ENCODE measurements at regions of chr15 and their contacts with region 1.

Region 1: DNA sequence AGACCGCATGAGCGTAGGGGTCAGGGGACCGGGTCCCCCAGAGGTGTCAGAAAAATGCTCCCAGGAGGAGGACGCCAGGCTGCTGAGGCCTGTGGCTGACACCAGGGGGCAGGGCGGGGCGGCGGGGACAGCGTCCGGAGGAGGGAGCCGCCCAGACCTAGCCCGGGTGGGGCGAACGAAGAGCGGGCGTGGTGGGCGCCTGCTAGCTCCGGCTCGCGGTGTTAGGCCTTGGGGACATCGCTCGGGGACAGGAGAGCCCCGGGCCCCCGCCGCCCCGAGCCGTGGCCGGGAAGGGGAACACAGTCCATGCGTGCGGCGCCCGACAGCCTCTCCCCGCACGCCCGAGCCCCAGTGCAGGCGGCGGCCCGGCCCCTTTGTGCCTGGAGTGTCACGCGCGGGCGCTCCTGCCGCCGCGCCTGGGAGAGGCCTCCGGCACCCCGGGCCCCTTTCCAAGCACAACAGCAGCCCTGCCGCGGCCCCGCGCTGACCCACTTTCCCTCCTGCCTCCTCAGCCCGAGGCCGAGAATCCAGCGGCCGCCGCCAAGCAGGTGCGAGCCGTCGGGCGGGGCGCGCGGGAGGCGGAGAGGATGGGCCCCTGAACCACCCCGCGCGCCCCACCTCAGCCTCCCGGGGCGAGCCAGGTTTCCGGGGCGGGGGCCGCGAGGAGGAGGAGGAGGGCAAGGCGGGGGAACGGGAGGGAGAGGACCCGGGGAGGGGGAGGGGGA is 111.0 kb upstream of the KLF13 start:
- DNase-seq: peak; percentile 69 to 83 (median 73)
- H3K4me3 ChIP-seq: peak overlapping the region; percentile 22
- H3K4me3 Mint-ChIP-seq: peak overlapping the region; percentile 56 to 91 (median 71)
- H3K27ac ChIP-seq: peak overlapping the region; percentile 24
- H3K27ac Mint-ChIP-seq: peak overlapping the region in 7 of 8 donors; percentile 21 to 89 (median 72)
- H3K4me1 ChIP-seq: peaks cover 24% of the 10 kb centered on the region
- H3K4me1 Mint-ChIP-seq: peaks cover 19 to 28% (median 20%) of the 10 kb centered on the region in 3 donors
- H3K27me3 ChIP-seq: no peaks in the 10 kb centered on the region
- H3K27me3 Mint-ChIP-seq: no peaks in the 10 kb centered on the region

Region 2: GRCh38 chr15:31200735-31201151 is 14.9 kb before region 1 on chr15:
- CTCF ChIA-PET with region 1: interaction called, 12 read pairs
- POLR2A ChIA-PET with region 1: interaction called, 3 read pairs
- DNase-seq: peak; percentile 34 to 82 (median 49)
- H3K4me3 ChIP-seq: no peak overlapping the region
- H3K4me3 Mint-ChIP-seq: no peak overlapping the region
- H3K27ac ChIP-seq: no peak overlapping the region
- H3K27ac Mint-ChIP-seq: peak overlapping the region in 2 of 8 donors; percentile 33 to 51
- H3K4me1 ChIP-seq: peaks cover 26% of the 10 kb centered on the region
- H3K4me1 Mint-ChIP-seq: peaks cover 13 to 18% (median 15%) of the 10 kb centered on the region in 3 donors
- H3K27me3 ChIP-seq: no peaks in the 10 kb centered on the region
- H3K27me3 Mint-ChIP-seq: peaks cover 2 to 3% of the 10 kb centered on the region in 2 donors

Region 3: DNA sequence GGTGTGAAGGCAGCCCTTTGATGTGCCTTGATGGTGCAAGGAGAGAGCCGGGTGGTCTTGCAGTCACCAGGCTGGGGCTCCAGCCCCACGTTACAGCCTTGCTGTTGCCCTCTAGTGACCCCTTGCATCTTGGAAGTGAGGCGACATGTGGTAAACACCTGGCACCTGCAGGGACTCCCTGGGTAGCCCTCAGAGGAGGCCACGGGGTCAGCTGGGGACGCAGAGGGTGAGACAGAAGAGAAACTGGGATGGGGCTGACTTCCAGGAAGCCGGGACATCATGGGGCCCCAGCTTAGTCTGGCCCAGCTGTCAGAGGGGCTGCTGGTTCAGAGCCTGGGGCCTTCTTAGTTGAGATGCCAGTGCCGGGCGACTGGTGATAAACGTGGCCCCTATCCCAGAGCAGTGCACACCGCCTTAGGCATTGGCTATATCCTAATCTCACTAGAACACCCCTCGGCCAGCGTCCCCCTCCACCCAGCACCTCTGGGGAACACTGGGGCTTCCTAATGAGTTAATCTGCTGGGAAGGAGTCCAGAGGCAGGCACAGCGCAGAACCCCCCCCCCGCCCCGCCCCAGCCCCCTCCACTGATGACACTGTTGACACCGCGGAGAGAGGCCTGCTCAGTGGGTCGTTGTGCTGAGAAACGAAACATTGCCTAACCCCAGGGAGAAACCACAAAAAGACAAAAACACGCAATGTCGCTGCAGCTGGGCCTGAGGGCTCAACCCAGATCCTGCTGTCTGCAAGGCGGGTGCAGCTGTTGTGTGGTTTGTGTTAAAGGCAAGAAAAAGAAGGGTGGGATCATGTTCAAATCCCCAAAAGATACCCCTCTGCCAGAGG is 50.4 kb after region 1 on chr15:
- CTCF ChIA-PET with region 1: interaction called, 13 read pairs
- POLR2A ChIA-PET with region 1: interaction called, 6 read pairs
- DNase-seq: peak; percentile 36 to 87 (median 80)
- H3K4me3 ChIP-seq: peak overlapping the region; percentile 46
- H3K4me3 Mint-ChIP-seq: peak overlapping the region; percentile 24 to 85 (median 82)
- H3K27ac ChIP-seq: peak overlapping the region; percentile 46
- H3K27ac Mint-ChIP-seq: peak overlapping the region; percentile 84 to 99 (median 98)
- H3K4me1 ChIP-seq: peaks cover 82% of the 10 kb centered on the region
- H3K4me1 Mint-ChIP-seq: peaks cover 63 to 92% (median 86%) of the 10 kb centered on the region in 3 donors
- H3K27me3 ChIP-seq: no peaks in the 10 kb centered on the region
- H3K27me3 Mint-ChIP-seq: no peaks in the 10 kb centered on the region

Region 4: GRCh38 chr15:31352911-31353811 is 137.5 kb after region 1 on chr15:
- CTCF ChIA-PET with region 1: interaction called, 13 read pairs
- POLR2A ChIA-PET with region 1: interaction called, 4 read pairs
- DNase-seq: peak; percentile 37 to 71 (median 67)
- H3K4me3 ChIP-seq: peak overlapping the region; percentile 33
- H3K4me3 Mint-ChIP-seq: peak overlapping the region; percentile 73 to 87 (median 82)
- H3K27ac ChIP-seq: peak overlapping the region; percentile 67
- H3K27ac Mint-ChIP-seq: peak overlapping the region; percentile 90 to 98 (median 96)
- H3K4me1 ChIP-seq: peaks cover 100% of the 10 kb centered on the region
- H3K4me1 Mint-ChIP-seq: peaks cover 96 to 99% (median 98%) of the 10 kb centered on the region in 3 donors
- H3K27me3 ChIP-seq: no peaks in the 10 kb centered on the region
- H3K27me3 Mint-ChIP-seq: peaks cover 0 to 1% of the 10 kb centered on the region in 2 donors

Measured in CD8-positive, alpha-beta memory T cell (primary cell).